Motor neuron (in vitro differentiated cells): ENCODE measurements at regions of chr21 and their contacts with region 1.

Region 1: GRCh38 chr21:33434770-33435360 is 31.7 kb downstream of the IFNGR2 start:
- ATAC-seq: peak; percentile 37 to 97 (median 93)
- H3K4me3 ChIP-seq: no peak overlapping the region
- H3K27ac ChIP-seq: peak overlapping the region; percentile 10 to 21
- H3K4me1 ChIP-seq: peaks cover 4 to 7% of the 10 kb centered on the region in 2 donors

Region 2: GRCh38 chr21:32994305-32994704 is 440.6 kb before region 1 on chr21:
- in situ Hi-C with region 1: loop called in 1 of 9 experiments (anchors 25 kb)
- ATAC-seq: peak in 3 of 8 experiments; percentile 31 to 57 (median 52)
- H3K4me3 ChIP-seq: no peak overlapping the region
- H3K27ac ChIP-seq: no peak overlapping the region
- H3K4me1 ChIP-seq: peaks cover 13 to 17% of the 10 kb centered on the region in 2 donors

Region 3: GRCh38 chr21:33151941-33152731 is 282.7 kb before region 1 on chr21:
- in situ Hi-C with region 1: no loop called
- ATAC-seq: peak in 5 of 8 experiments; percentile 71 to 97 (median 90)
- H3K4me3 ChIP-seq: no peak overlapping the region
- H3K27ac ChIP-seq: peak overlapping the region in 1 of 2 donors; percentile 2
- H3K4me1 ChIP-seq: peaks cover 8 to 10% of the 10 kb centered on the region in 2 donors